Right cardiac atrium (tissue), 5 donors: ENCODE measurements at regions of chr1 and their contacts with region 1.

Region 1: GRCh38 chr1:173714759-173715537 is at the start of gene KLHL20:
- DNase-seq: peak; percentile 78 to 90 (median 89)
- ATAC-seq: peak; percentile 98 to 99
- H3K4me3 ChIP-seq: peak within 1 kb of the TSS; percentile 86
- H3K27ac ChIP-seq: peak within 1 kb of the TSS; percentile 80
- H3K4me1 ChIP-seq: peaks cover 2% of the 10 kb centered on the region
- H3K27me3 ChIP-seq: no peaks in the 10 kb centered on the region
- total RNA-seq, gene KLHL20: 17.5 to 22.0 (median 21.6) TPM

Region 2: GRCh38 chr1:173476664-173477285 is 238.2 kb before region 1 on chr1:
- intact Hi-C with region 1: loop called in 1 of 4 experiments (anchors 10 kb)
- DNase-seq: peak; percentile 92 to 97 (median 97)
- ATAC-seq: peak; percentile 91 to 93
- H3K4me3 ChIP-seq: peak overlapping the region; percentile 71
- H3K27ac ChIP-seq: peak overlapping the region; percentile 96
- H3K4me1 ChIP-seq: peaks cover 4% of the 10 kb centered on the region
- H3K27me3 ChIP-seq: no peaks in the 10 kb centered on the region